Naive thymus-derived CD8-positive, alpha-beta T cell (primary cell): ENCODE measurements at regions of chr17 and their contacts with region 1.

Region 1: DNA sequence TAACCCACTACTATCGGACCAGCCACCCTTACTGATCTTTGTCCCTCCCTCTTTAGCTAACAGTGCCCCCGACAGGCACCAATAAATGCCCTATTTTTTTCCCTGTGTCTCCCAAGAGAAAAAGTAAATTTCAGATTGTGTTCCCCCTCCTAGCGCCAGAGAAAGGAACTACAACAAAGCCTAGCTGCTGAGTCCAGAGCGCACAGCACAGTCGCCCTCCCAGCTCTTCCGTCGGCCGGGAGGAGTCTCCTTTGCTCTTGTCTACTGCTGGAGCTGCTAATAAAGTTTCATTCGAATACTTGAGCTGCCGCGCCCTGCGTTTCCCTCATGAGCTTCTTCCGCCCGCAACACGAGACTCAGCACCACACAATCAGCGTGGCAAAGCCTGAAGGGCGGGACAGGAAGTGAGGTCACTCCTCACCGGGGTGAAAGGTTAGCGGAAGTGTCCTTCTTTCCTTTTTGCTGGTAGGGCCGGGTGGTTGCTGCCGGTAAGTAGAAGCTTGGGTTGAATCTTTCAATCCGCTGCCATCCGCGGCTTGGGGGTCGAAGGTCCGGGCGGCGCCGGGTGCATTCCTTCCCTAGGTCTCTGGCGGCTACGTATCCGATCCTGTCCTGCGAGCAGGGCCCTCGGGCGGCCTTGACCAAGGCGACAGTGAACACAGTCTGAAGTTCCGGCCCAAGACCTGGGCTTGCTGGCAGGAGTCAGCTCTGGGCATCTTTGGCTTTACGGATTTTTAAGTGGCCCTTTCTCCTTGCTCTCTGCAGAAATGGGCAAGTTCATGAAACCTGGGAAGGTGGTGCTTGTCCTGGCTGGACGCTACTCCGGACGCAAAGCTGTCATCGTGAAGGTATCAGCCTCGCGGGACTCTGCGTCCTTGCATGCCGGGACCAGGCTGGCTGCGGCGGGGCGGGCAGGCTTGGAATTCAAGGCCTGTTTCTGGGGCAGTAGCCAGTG is at the start of gene RPL27:
- DNase-seq: peak; percentile 86 to 99 (median 98)
- ATAC-seq: peak; percentile 94 to 95
- H3K4me3 Mint-ChIP-seq: peak within 1 kb of the TSS; percentile 93 to 98 (median 96)
- H3K27ac Mint-ChIP-seq: peak within 1 kb of the TSS; percentile 91 to 100 (median 99)
- H3K4me1 Mint-ChIP-seq: peaks cover 16 to 35% (median 27%) of the 10 kb centered on the region in 4 donors
- H3K27me3 Mint-ChIP-seq: no peaks in the 10 kb centered on the region
- polyA plus RNA-seq, gene RPL27: 2,416 to 2,846 (median 2,434) TPM

Region 2: DNA sequence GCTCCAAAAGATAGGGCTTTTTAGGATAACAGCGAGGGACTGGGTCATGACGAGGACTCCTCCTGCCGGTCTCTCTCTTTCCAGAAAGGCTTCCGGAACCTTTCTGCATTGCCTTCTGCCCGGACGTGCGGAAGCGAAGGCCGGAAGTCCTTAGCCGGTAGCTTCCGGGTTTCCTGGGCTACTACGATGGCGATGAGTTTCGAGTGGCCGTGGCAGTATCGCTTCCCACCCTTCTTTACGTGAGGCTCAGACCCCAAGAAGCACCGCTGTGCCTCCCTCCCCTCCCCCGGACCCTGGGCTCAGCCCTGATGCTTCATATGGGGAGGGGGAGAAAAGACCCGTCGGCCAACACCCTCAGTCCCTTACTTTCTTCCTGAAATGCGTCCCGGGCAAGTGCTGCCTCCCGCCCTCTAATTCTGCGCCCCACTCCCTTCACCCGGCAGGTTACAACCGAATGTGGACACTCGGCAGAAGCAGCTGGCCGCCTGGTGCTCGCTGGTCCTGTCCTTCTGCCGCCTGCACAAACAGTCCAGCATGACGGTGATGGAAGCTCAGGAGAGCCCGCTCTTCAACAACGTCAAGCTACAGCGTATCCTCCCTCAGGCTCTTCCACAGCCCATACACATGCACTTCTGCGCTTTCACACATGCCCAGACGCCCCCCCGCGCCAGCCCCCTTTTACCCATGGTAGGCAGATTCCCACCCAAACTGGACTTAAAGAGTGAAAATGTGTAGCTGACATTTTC is 224.8 kb before region 1 on chr17 and contains the start of gene VPS25:
- POLR2A ChIA-PET with region 1: interaction called, 11 read pairs
- DNase-seq: peak; percentile 56 to 87 (median 72)
- ATAC-seq: peak; percentile 97 to 98
- H3K4me3 Mint-ChIP-seq: peak within 1 kb of the TSS; percentile 97 to 100 (median 99)
- H3K27ac Mint-ChIP-seq: peak within 1 kb of the TSS; percentile 97 to 100 (median 99)
- H3K4me1 Mint-ChIP-seq: peaks cover 18 to 24% (median 23%) of the 10 kb centered on the region in 4 donors
- H3K27me3 Mint-ChIP-seq: peaks cover 0 to 4% (median 2%) of the 10 kb centered on the region in 5 donors
- polyA plus RNA-seq, gene VPS25: 43.9 to 64.5 (median 56.3) TPM

Region 3: GRCh38 chr17:42980398-42981397 is 17.6 kb before region 1 on chr17 and contains the start of gene RUNDC1:
- POLR2A ChIA-PET with region 1: interaction called, 18 read pairs
- DNase-seq: peak; percentile 85 to 94 (median 89)
- ATAC-seq: peak; percentile 85 to 90
- H3K4me3 Mint-ChIP-seq: peak within 1 kb of the TSS; percentile 91 to 100 (median 98)
- H3K27ac Mint-ChIP-seq: peak within 1 kb of the TSS; percentile 92 to 99 (median 96)
- H3K4me1 Mint-ChIP-seq: peaks cover 16 to 55% (median 39%) of the 10 kb centered on the region in 4 donors
- H3K27me3 Mint-ChIP-seq: no peaks in the 10 kb centered on the region
- polyA plus RNA-seq, gene RUNDC1: 11.8 to 15.9 (median 14.6) TPM

Region 4: GRCh38 chr17:43170766-43171585 is 172.7 kb after region 1 on chr17 and contains the start of gene NBR1:
- POLR2A ChIA-PET with region 1: interaction called, 16 read pairs
- DNase-seq: peak; percentile 76 to 99 (median 96)
- ATAC-seq: peak; percentile 78 to 83
- H3K4me3 Mint-ChIP-seq: no peak within 1 kb of the TSS
- H3K27ac Mint-ChIP-seq: no peak within 1 kb of the TSS
- H3K4me1 Mint-ChIP-seq: peaks cover 14 to 37% (median 28%) of the 10 kb centered on the region in 4 donors
- H3K27me3 Mint-ChIP-seq: no peaks in the 10 kb centered on the region
- polyA plus RNA-seq, gene NBR1: 63.3 to 73.2 (median 68.1) TPM

Region 5: DNA sequence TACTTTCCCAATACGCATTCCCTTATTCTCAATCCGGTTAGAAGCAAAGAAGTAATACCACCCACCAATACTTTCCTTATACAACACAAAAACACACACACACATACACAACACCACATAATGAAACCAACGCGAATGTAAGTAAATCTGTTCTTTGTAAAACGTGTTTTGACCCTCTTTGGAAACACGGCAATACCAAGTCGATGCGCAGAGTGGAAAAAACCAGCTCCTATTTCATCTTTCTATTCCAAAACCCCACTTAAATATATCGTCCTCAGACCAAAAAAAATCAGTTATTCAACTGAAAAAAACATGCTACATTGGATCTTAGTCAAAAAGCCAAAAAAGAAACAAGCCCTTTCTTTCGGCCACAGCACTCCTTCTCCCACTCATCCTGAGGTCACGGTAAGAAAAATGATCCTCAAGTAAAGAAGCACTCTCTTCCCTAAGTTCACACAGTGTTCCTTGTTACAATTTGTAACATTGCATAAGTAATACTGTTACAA is 369.5 kb after region 1 on chr17:
- POLR2A ChIA-PET with region 1: interaction called, 44 read pairs
- DNase-seq: peak in 2 of 10 donors; percentile 88 to 93
- ATAC-seq: peak; percentile 56 to 67
- H3K4me3 Mint-ChIP-seq: peak overlapping the region; percentile 79 to 98 (median 97)
- H3K27ac Mint-ChIP-seq: peak overlapping the region; percentile 99 to 100 (median 100)
- H3K4me1 Mint-ChIP-seq: peaks cover 32 to 63% (median 46%) of the 10 kb centered on the region in 4 donors
- H3K27me3 Mint-ChIP-seq: no peaks in the 10 kb centered on the region

Region 6: GRCh38 chr17:43483674-43484372 is 485.6 kb after region 1 on chr17 and contains the start of gene DHX8:
- POLR2A ChIA-PET with region 1: interaction called, 11 read pairs
- DNase-seq: peak; percentile 96 to 99 (median 98)
- ATAC-seq: peak; percentile 94 to 96
- H3K4me3 Mint-ChIP-seq: peak within 1 kb of the TSS; percentile 95 to 100 (median 100)
- H3K27ac Mint-ChIP-seq: peak within 1 kb of the TSS; percentile 97 to 100 (median 100)
- H3K4me1 Mint-ChIP-seq: peaks cover 10 to 48% (median 35%) of the 10 kb centered on the region in 4 donors
- H3K27me3 Mint-ChIP-seq: no peaks in the 10 kb centered on the region
- polyA plus RNA-seq, gene DHX8: 16.3 to 28.4 (median 28.2) TPM